Left colon (tissue), 2 donors: ENCODE measurements at regions of chr5 and their contacts with region 1.

Region 1: GRCh38 chr5:69234457-69235268 is at the start of gene CDK7:
- DNase-seq: peak; percentile 94 to 95
- ATAC-seq: peak; percentile 98
- total RNA-seq, gene CDK7: 22.1 to 25.2 TPM

Region 2: GRCh38 chr5:69189162-69190086 is 45.2 kb before region 1 on chr5 and contains the start of gene CENPH:
- intact Hi-C with region 1: loop called in 1 of 2 experiments (anchors 10 kb)
- DNase-seq: peak; percentile 89 to 91
- ATAC-seq: peak; percentile 98
- total RNA-seq, gene CENPH: 3.0 to 5.0 TPM